Activated CD4-positive, alpha-beta T cell treated with anti-CD3 and anti-CD28 coated beads for 36 hours (primary cell): ENCODE measurements at regions of chr14 and their contacts with region 1.

Region 1: GRCh38 chr14:77097700-77098528 is at the start of gene CIPC:
- DNase-seq: peak; percentile 100
- ATAC-seq: peak; percentile 91
- H3K4me3 Mint-ChIP-seq: peak within 1 kb of the TSS; percentile 87
- H3K27ac Mint-ChIP-seq: peak within 1 kb of the TSS; percentile 99
- H3K4me1 Mint-ChIP-seq: peaks cover 40% of the 10 kb centered on the region
- H3K27me3 Mint-ChIP-seq: no peaks in the 10 kb centered on the region
- total RNA-seq, gene CIPC: 8.6 to 10.0 TPM

Region 2: DNA sequence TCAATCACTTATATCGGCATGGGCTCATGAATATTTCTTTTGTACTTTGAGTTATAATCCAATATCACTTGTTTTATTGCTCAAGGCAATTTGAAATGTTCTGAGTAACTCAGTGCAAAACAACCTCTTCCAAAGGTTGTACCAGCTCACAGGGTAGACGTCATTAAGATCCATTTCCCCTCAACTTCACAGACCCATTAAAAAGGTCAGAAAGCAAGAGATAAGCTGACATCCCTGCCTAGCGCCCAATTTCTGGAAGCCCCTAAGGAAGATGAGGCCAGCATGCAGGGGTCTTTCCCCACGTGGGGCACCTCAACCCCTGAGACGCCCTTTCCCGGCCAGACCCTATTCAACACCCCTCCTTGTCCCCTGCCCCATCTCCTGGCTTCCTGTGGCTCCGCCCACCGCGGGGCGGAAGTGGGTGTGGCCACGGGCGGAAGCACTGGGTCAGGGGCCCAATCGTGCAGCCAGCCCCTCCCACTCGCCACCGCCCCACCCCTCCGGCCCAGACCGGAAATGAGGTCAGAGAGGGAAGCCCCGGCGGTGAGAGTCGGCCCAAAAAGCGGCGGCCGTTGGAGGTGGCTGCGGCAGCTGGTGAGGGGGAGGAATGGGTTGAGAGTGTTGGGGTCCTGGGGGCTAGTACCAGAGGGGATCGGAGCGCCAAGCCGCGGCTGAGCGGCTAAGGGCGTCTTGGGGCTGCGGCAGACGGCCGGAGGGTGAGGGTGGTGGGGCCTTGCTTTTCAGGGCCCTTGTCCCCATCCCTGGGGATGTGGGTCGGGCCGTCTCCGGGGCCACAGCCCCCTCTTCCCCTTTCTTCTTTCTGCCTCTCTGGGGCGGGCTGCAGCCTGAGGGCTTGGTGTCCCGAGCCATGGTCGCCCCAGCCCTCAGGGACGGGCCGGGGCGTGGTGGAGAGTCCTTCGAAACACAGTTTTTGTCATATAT is 946.2 kb before region 1 on chr14 and contains the start of gene GPATCH2L:
- CTCF ChIA-PET with region 1: no interaction called
- POLR2A ChIA-PET with region 1: no interaction called
- intact Hi-C with region 1: loop called in 1 of 2 experiments (anchors 5 kb)
- DNase-seq: peak; percentile 98
- ATAC-seq: peak; percentile 92
- H3K4me3 Mint-ChIP-seq: peak within 1 kb of the TSS; percentile 92
- H3K27ac Mint-ChIP-seq: peak within 1 kb of the TSS; percentile 95
- H3K4me1 Mint-ChIP-seq: peaks cover 46% of the 10 kb centered on the region
- H3K27me3 Mint-ChIP-seq: no peaks in the 10 kb centered on the region
- total RNA-seq, gene GPATCH2L: 43.0 to 47.2 TPM

Region 3: DNA sequence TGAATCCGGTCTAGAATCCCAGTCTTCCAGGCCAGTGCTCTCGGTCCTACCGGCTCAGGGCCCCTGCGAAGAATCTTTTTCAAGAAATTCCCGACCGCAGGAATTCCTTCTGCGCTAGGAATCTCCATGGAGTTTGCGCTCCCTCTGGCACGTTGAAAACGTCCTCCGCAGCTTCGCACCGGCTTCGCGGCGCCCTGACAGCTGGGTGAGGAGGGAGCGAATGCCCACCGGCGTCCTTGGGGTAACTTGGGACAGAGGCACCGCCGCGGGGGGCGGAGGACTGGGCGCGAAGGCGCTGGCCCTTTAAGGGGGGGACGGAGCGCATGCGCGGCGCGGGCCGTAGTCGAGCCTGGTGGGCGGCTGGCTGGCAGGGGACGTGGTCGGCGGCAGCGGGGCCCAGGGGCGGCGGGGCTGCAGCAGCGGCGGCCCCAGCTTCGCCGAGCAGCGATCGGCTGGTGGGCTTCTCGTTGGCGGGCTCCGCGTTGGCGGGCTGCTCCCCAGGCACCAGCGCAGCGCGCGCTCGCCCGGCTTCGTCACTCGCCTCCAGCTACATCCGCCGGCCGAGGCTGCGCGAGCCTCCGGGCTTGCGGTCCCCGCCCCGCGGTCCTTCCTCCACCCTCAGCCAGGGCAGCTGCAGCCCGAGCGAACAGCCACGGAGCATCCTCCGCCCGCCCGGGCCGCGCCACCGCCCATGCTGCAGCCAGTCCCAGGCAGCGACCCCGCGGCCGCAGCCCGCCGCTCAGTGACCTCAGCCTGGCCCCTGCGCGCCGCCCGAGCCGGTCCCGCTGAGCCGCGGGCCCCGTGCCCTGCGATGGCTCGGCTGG is 336.6 kb before region 1 on chr14 and contains the start of gene VASH1:
- CTCF ChIA-PET with region 1: no interaction called
- POLR2A ChIA-PET with region 1: no interaction called
- intact Hi-C with region 1: no loop called
- DNase-seq: peak; percentile 78
- ATAC-seq: peak; percentile 89
- H3K4me3 Mint-ChIP-seq: peak within 1 kb of the TSS; percentile 73
- H3K27ac Mint-ChIP-seq: peak within 1 kb of the TSS; percentile 11
- H3K4me1 Mint-ChIP-seq: peaks cover 8% of the 10 kb centered on the region
- H3K27me3 Mint-ChIP-seq: peaks cover 27% of the 10 kb centered on the region
- total RNA-seq, gene VASH1: 4.0 to 5.3 TPM

Region 4: DNA sequence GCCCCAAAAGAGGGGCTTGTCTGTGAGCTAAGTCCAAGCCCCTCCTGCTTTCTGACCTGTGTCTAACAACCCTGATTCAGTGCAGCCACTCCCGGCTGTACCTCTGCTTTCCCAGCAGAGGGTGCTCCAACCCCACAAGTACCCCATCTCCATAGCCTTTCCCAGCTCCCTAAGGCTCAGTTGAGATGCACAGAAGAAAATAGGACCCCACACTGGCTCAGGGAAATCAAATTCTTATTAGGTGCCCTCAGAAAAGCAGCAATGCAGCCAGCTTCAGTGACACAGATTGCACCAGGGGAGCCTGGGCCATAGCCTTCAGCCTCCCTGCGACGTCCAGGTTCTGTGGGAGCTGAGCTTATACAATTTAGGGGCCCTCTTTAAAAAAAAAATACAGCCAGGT is 221.8 kb before region 1 on chr14:
- CTCF ChIA-PET with region 1: interaction called, 97 read pairs
- POLR2A ChIA-PET with region 1: no interaction called
- intact Hi-C with region 1: loop called (anchors 1 kb)
- DNase-seq: peak; percentile 69
- ATAC-seq: peak; percentile 89
- H3K4me3 Mint-ChIP-seq: no peak overlapping the region
- H3K27ac Mint-ChIP-seq: no peak overlapping the region
- H3K4me1 Mint-ChIP-seq: no peaks in the 10 kb centered on the region
- H3K27me3 Mint-ChIP-seq: no peaks in the 10 kb centered on the region

Region 5: DNA sequence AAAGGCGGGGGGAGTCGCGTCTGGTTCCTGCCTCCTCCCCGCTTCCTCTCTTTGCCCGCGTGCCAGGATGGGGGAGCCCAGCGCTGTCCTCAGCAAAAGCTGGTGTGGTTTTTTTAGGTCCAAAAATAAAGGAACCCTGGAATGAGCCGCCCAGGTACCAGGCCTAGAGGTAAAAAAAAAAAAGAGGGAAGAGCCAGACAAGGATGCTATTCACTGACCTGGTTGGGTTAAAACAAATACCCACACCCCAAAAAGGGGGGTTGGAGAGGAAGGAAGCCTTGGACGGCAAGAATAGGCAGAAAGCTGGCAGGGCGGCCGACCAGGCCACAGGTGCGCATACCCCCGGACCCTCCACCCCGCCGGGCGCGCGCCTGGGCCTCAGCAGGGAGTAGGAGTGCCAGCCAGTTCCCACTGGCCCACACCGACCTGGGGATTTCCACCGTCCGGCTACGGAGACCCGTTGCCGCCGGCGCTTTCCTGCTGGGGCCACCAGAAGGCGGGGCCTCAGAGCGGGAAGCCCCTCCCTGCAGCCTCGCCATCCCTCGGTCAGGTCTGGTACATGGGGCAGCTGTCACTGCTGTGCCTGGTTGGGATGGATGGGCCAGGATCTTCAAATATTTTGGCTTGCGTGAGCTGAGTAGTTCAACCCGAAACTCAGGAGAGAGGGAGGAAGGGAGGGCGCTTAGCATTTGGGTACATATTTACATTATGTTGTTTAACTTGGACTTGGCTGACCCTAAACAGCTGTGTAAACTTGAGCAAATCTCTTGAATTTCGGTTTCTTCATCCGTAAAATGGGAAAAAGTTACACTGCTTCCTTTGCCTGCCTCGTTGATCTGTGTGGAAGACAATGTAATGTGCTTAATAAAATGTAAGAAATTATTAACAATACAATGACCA is 64.0 kb before region 1 on chr14:
- CTCF ChIA-PET with region 1: interaction called, 3 read pairs
- POLR2A ChIA-PET with region 1: no interaction called
- intact Hi-C with region 1: loop called (anchors 1 to 2 kb)
- DNase-seq: peak; percentile 94
- ATAC-seq: peak; percentile 77
- H3K4me3 Mint-ChIP-seq: peak overlapping the region; percentile 89
- H3K27ac Mint-ChIP-seq: peak overlapping the region; percentile 97
- H3K4me1 Mint-ChIP-seq: peaks cover 76% of the 10 kb centered on the region
- H3K27me3 Mint-ChIP-seq: no peaks in the 10 kb centered on the region

Region 6: DNA sequence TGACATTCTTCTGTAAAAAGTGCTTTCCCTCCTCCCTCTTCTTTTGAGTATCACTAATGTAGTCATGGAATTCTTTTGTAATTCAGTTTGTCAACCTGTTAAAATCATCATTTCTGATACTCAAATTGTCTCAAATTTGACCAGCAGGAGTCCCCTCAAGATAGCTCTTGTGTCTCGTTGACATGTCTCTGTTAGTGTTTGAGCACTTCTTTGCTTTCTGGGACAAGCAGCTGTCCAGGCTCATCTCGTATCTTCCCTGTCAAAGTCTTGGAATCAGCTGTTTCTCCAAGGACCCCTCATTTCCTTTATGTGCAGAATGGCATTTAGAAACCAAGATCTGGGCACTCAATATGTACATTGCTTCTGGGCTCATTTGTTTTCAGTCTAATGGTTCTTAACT is 10.8 kb after region 1 on chr14:
- CTCF ChIA-PET with region 1: interaction called, 10 read pairs
- POLR2A ChIA-PET with region 1: interaction called, 3 read pairs
- intact Hi-C with region 1: no loop called
- DNase-seq: no peak
- ATAC-seq: no peak
- H3K4me3 Mint-ChIP-seq: no peak overlapping the region
- H3K27ac Mint-ChIP-seq: no peak overlapping the region
- H3K4me1 Mint-ChIP-seq: no peaks in the 10 kb centered on the region
- H3K27me3 Mint-ChIP-seq: no peaks in the 10 kb centered on the region

Region 7: DNA sequence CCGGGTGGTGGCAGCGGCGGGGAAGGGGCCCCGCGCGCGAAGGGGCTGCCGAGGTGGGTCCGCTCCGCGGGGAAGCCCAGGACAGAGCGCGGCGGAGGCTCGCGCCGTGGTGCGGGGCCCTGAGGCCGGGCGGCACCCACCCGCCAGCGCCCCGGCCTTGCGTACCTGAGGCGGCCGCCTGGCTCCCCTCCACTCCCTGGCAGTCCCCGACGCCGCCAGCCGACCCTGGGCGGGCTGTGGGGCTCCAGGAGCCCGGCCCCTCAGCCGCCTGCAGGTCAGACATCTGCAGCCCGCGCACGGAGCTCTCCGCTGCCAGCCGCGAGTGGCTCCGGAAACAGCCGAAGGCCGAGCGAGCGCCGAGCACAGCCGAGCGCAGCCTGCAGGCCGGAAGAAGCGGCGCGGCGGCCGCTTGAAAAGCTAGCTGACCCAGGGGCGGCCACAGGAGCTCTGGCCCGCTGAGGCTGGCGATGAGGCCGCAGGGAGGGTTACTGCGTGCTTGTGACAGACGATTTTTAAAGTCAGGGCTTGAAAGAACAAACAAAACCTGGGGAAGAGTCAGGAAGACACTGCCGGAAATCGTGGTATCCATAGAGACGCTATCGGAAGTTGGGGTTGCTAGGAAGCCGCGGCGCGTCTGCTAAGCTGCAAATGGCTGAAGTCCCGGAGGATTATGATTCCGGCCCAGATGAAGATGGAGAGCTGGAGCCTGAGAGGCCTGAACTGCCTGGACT is 279.0 kb after region 1 on chr14 and contains the starts of genes SAMD15 and TMED8:
- CTCF ChIA-PET with region 1: no interaction called
- POLR2A ChIA-PET with region 1: no interaction called
- intact Hi-C with region 1: loop called in 1 of 2 experiments (anchors 1 kb)
- DNase-seq: peak; percentile 91
- ATAC-seq: peak; percentile 95
- H3K4me3 Mint-ChIP-seq: no peak within 1 kb of the TSS
- H3K27ac Mint-ChIP-seq: peak within 1 kb of the TSS; percentile 86
- H3K4me1 Mint-ChIP-seq: peaks cover 40% of the 10 kb centered on the region
- H3K27me3 Mint-ChIP-seq: no peaks in the 10 kb centered on the region
- total RNA-seq, gene SAMD15: 0.25 TPM
- total RNA-seq, gene TMED8: 25.3 to 27.9 TPM

Region 8: DNA sequence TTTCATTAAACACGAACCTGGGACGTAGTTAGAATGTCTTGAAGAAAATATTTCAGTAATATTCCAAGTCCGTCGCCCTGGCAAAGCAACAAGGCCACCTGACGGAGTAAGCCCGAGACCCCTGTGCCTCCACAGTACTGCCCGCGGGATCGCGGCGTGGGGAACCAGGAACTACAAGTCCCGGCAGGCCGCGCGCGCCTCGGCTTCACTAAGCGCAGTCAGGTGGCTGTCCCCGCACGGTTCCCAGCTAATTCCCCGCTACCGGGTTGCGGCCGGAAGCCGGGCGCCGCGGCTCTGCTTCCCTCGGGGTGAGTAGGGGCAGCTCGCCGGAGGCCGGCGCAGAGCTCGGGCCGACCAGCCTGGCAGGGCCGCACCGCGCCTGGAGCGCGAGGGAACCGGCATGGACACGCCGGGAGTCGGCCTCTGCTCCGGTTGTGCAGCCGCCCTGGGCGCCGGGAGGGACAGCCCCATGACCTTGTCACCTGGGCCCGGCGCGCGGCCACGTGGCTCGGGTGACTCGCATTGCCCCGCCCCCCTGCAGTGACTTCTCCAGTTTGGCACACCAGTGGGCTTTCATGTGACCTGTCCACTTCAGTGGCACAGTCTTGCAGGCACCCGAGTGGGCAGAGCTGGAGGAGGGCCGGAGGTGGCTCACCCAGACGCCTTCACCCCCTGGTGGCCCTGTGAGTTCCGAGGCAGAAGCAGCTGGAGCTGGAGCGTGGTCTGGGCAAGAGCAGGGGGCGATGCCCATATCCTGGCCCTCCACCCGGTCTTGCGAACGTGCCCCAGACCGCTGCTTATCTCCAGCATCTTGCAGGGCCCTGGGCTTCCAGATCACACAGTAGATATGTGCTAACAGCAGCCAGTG is 702.2 kb after region 1 on chr14 and contains the start of gene ADCK1:
- CTCF ChIA-PET with region 1: no interaction called
- POLR2A ChIA-PET with region 1: no interaction called
- intact Hi-C with region 1: loop called in 1 of 2 experiments (anchors 1 kb)
- DNase-seq: peak; percentile 94
- ATAC-seq: peak; percentile 94
- H3K4me3 Mint-ChIP-seq: peak within 1 kb of the TSS; percentile 83
- H3K27ac Mint-ChIP-seq: peak within 1 kb of the TSS; percentile 87
- H3K4me1 Mint-ChIP-seq: peaks cover 11% of the 10 kb centered on the region
- H3K27me3 Mint-ChIP-seq: no peaks in the 10 kb centered on the region
- total RNA-seq, gene ADCK1: 4.6 to 4.9 TPM